H1 (cell line): ENCODE measurements at regions of chr14 and their contacts with region 1.

Region 1: GRCh38 chr14:21257394-21257909 is 11.8 kb downstream of the HNRNPC start:
- DNase-seq: no peak
- H3K4me3 ChIP-seq: no peak overlapping the region
- H3K27ac ChIP-seq: no peak overlapping the region
- H3K4me1 ChIP-seq: peaks cover 2 to 4% (median 2%) of the 10 kb centered on the region in 4 experiments; a peak in 5 of 7 replicates
- H3K27me3 ChIP-seq: no peaks in the 10 kb centered on the region
- CTCF ChIP-seq: no peak
- EP300 ChIP-seq: no peak
- POLR2A ChIP-seq: peak; percentile 46 to 70
- RAD21 ChIP-seq: no peak

Region 2: DNA sequence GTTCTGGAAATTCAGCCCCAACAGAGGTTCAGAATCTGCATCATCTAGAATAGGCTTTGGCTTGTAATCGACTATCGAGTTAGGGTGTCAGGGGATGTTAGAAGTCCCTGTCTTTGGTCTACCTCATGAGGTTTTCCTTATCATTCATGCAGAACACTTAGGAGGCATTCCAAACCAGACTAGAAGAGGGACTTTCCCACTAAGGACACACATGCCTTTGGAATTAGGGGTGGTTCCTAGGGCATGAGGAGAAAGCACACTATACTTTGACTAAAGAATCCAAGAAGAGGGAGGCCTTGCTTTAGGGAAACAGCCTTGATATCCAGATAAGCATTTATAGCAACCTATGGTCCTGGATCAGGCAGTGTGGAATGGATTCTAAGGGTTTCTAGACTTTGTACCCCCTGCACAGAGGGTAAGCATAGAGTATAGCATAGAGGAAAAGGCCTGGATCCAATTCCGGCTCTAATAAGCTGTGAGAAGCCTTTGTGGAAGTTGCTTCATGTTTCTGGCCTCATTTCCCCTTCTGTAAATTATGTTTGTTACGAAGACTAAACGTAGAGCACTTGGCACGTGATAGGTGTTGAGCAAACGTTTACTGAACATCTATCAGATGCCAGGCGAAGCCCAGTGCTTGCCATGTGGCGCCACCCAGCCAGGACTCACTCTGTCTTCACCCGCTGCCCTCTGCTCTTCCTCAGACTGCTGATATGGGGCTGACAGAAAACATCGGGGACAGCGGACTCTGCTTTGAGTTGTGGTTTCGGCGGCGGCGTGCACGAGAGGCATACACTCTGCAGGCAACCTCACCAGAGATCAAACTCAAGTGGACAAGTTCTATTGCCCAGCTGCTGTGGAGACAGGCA is 172.2 kb before region 1 on chr14:
- CTCF ChIA-PET with region 1: no interaction called
- POLR2A ChIA-PET with region 1: no interaction called
- DNase-seq: no peak
- H3K4me3 ChIP-seq: no peak overlapping the region
- H3K27ac ChIP-seq: no peak overlapping the region
- H3K4me1 ChIP-seq: peaks cover 0 to 5% (median 0%) of the 10 kb centered on the region in 4 experiments; a peak in 2 of 7 replicates
- H3K27me3 ChIP-seq: no peaks in the 10 kb centered on the region
- CTCF ChIP-seq: no peak
- EP300 ChIP-seq: no peak
- POLR2A ChIP-seq: 0 out of 3 replicates have a peak, but pooled peaks of 1 of the 2 experiments have one; percentile 35
- RAD21 ChIP-seq: no peak

Region 3: GRCh38 chr14:21220874-21221477 is 36.5 kb before region 1 on chr14:
- CTCF ChIA-PET with region 1: interaction called, 3 read pairs
- POLR2A ChIA-PET with region 1: interaction called, 21 read pairs
- DNase-seq: no peak
- H3K4me3 ChIP-seq: no peak overlapping the region
- H3K27ac ChIP-seq: 0 out of 2 replicates have a peak overlapping the region, but pooled peaks have one; percentile 13
- H3K4me1 ChIP-seq: peaks cover 0 to 2% (median 0%) of the 10 kb centered on the region in 4 experiments; a peak in 2 of 7 replicates
- H3K27me3 ChIP-seq: no peaks in the 10 kb centered on the region
- CTCF ChIP-seq: no peak
- EP300 ChIP-seq: no peak
- POLR2A ChIP-seq: no peak
- RAD21 ChIP-seq: no peak

Region 4: GRCh38 chr14:21233457-21234076 is 23.9 kb before region 1 on chr14:
- CTCF ChIA-PET with region 1: no interaction called
- POLR2A ChIA-PET with region 1: interaction called, 836 read pairs
- DNase-seq: no peak
- H3K4me3 ChIP-seq: no peak overlapping the region
- H3K27ac ChIP-seq: no peak overlapping the region
- H3K4me1 ChIP-seq: no peaks in the 10 kb centered on the region
- H3K27me3 ChIP-seq: no peaks in the 10 kb centered on the region
- CTCF ChIP-seq: peak; percentile 27 to 55 (median 52); a peak in 3 of 4 replicates
- EP300 ChIP-seq: no peak
- POLR2A ChIP-seq: no peak
- RAD21 ChIP-seq: peak; percentile 36 to 39; a peak in 2 of 4 replicates

Region 5: GRCh38 chr14:21346549-21347135 is 89.2 kb after region 1 on chr14:
- CTCF ChIA-PET with region 1: no interaction called
- POLR2A ChIA-PET with region 1: interaction called, 15 read pairs
- DNase-seq: no peak
- H3K4me3 ChIP-seq: no peak overlapping the region
- H3K27ac ChIP-seq: no peak overlapping the region
- H3K4me1 ChIP-seq: no peaks in the 10 kb centered on the region; a peak in 1 of 7 replicates
- H3K27me3 ChIP-seq: no peaks in the 10 kb centered on the region
- CTCF ChIP-seq: no peak
- EP300 ChIP-seq: no peak
- POLR2A ChIP-seq: no peak
- RAD21 ChIP-seq: no peak